HepG2 (cell line): ENCODE measurements at regions of chr6 and their contacts with region 1.

Region 1: DNA sequence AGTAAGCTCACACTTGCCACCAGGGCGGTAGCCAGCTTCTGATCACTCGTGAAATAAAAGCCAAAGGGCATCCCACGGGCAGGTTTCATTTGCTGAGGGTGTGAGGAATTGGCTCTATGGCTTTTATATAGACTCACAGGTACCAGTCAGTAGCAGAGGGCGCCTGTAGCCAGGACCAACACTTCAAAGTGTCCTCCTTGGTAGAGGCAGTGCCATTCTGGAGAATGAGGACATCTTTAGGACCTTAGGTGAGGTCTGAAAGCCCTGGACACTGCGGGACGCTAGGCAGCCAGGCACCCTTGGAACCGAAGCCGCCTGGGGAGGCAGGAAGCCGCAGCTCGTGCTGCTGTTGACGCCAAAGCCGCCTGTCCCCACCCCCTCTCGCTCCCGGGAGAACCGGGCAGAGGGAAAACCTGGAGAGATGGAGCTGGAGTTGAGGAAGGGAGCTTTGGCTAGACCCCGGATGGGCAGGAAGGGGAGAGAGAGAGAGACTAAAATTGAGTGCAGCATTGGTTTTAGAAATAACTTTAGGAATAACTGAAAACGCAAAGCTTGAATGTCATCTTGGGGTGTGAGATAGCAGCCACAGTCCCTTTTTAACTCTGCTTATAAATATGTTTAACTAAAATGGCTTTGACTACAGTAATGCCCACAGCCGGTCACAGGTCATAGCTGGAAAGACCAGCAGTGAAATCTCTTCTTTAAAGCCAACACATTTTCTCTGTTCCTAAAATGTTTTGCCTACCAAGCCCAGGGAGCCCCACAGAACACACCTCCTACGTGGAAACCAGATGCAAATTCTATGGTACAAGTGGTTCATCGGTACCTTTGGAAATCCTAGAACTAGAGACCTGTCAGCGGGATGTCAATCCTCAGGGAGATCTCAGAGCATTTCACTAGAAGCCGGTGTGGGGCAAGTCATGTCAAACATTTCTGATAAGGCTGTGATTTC is 128.5 kb upstream of the CDYL start:
- DNase-seq: peak; percentile 53
- ATAC-seq: peak; percentile 95
- H3K4me3 ChIP-seq: peak overlapping the region; percentile 4 to 53 (median 11); a peak in 4 of 6 replicates
- H3K27ac ChIP-seq: no peak overlapping the region
- H3K4me1 ChIP-seq: peaks cover 12% of the 10 kb centered on the region
- H3K27me3 ChIP-seq: peaks cover 0 to 29% of the 10 kb centered on the region in 2 experiments; a peak in 2 of 5 replicates
- CTCF ChIP-seq: 0 out of 2 replicates have a peak, but pooled peaks have one; percentile 25
- EP300 ChIP-seq: no peak
- POLR2A ChIP-seq: no peak
- RAD21 ChIP-seq: no peak

Region 2: DNA sequence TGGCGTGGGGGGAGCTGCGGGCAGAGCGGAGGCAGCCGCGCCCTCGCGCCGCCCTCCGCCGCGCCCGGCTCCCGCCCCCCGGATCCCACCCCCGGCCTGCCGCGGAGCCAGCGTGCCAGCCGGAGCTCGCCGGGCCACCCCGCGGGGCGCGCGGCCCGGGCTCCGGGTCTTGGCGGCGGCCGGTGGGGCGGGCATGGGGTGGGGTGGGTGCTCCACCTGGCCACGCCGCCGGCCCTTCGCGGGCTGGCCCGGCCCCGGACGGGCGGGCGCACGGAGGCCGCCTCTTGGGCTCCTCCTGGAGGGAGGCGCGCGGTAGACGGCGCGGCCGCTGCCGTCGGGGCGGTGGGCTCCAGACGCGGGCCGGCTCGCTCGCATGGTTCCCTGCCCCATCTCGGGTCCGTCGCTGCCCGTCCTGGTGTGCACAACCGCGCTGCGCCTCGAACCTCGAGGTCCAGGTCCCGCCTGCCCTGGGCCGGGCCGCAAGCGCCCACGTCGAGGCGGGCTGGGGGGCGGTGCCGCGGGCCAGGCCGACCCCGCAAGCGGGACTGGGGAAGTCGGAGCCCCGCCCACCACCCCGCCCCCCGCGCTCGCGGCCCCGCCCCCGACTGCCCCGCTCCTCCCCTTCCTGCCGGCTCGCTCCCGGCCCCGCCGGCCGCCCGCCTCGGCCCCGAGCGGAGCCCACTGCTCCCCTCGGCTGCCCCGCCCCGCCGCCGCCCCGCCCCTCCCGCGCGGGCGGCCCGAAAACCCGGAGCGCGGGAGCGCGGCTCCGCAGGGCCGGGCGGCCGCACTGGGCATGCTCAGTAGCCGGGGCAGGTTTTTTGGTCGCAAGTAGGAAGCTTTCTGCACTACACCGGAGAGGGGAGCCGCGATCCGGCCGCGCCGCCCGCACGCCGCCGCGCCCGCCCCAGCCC is 128.1 kb after region 1 on chr6 and contains the start of gene CDYL:
- CTCF ChIA-PET with region 1: no interaction called
- POLR2A ChIA-PET with region 1: interaction called, 7 read pairs
- in situ Hi-C with region 1: no loop called
- intact Hi-C with region 1: loop called (anchors 5 kb)
- DNase-seq: peak; percentile 78
- ATAC-seq: peak; percentile 79
- H3K4me3 ChIP-seq: peak within 1 kb of the TSS; percentile 69 to 82 (median 81)
- H3K27ac ChIP-seq: peak within 1 kb of the TSS; percentile 48
- H3K4me1 ChIP-seq: peaks cover 36% of the 10 kb centered on the region
- H3K27me3 ChIP-seq: peaks cover 0 to 43% of the 10 kb centered on the region in 2 experiments; a peak in 4 of 5 replicates
- CTCF ChIP-seq: peak; percentile 13; the same call in 1 of the 2 replicates
- EP300 ChIP-seq: no peak
- POLR2A ChIP-seq: peak; percentile 38 to 53; a peak in 2 of 4 replicates
- RAD21 ChIP-seq: peak; percentile 61
- total RNA-seq, gene CDYL: 52.8 and 105 TPM in 2 replicates

Region 3: GRCh38 chr6:4848382-4849068 is 200.8 kb after region 1 on chr6:
- CTCF ChIA-PET with region 1: no interaction called
- POLR2A ChIA-PET with region 1: no interaction called
- in situ Hi-C with region 1: no loop called
- intact Hi-C with region 1: loop called (anchors 5 kb)
- DNase-seq: peak; percentile 62
- ATAC-seq: peak; percentile 93
- H3K4me3 ChIP-seq: no peak overlapping the region
- H3K27ac ChIP-seq: no peak overlapping the region
- H3K4me1 ChIP-seq: peaks cover 10% of the 10 kb centered on the region
- H3K27me3 ChIP-seq: no peaks in the 10 kb centered on the region
- CTCF ChIP-seq: peak; percentile 81
- EP300 ChIP-seq: no peak
- POLR2A ChIP-seq: no peak
- RAD21 ChIP-seq: peak; percentile 79

Region 4: GRCh38 chr6:5125152-5126006 is 477.7 kb after region 1 on chr6:
- CTCF ChIA-PET with region 1: no interaction called
- POLR2A ChIA-PET with region 1: no interaction called
- in situ Hi-C with region 1: no loop called
- intact Hi-C with region 1: no loop called
- DNase-seq: peak; percentile 72
- ATAC-seq: peak; percentile 76
- H3K4me3 ChIP-seq: no peak overlapping the region
- H3K27ac ChIP-seq: peak overlapping the region; percentile 34
- H3K4me1 ChIP-seq: peaks cover 47% of the 10 kb centered on the region
- H3K27me3 ChIP-seq: no peaks in the 10 kb centered on the region
- CTCF ChIP-seq: no peak
- EP300 ChIP-seq: 0 out of 4 replicates have a peak, but pooled peaks of 1 of the 2 experiments have one; percentile 20
- POLR2A ChIP-seq: no peak
- RAD21 ChIP-seq: no peak